MCF 10A (cell line): ENCODE measurements at regions of chr9 and their contacts with region 1.

Region 1: DNA sequence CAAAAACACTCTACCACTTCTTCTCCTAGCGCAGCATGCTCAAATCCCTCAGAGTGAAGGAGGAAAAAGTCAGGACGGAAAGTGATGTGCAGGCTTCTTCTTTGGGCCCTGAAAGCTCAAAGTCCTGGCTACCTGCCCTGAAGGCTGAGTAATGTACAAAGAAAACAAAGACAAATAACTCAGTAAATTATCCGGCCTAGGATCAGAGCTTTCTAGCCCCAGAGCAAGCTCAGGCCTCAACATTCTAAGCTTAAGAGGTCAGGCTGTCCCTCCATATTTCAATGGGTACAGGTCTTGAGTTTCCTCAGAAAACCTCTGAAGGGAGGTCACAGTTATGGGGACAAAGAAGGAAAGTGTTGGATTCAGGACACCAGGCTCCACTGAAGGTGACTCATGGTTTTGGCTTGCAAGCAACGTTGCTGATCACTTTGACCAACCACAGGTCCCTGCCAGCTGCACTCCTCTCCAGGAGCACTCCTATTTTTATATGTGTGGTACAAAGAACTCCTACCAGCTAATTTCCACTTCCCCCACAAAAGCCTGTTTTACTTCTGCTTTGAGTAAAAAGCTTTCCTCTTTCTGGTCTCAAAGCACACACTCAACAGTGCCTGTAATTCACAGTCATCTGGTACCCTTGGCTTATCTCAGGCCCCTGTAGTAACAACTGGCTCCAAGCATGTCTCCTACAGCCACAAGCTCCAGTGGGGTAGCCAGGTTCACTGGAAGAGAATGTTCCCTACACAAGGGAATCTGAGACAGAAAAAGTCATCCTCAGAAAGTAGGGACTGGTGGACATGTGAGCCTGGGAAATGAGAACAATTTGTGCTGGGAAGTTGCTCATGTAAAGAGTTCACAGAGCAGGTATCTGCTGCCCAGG is 115.7 kb downstream of the UGCG start:
- DNase-seq: peak; percentile 92
- H3K4me3 Mint-ChIP-seq: peak overlapping the region; percentile 8
- H3K27ac Mint-ChIP-seq: peak overlapping the region; percentile 84
- H3K4me1 Mint-ChIP-seq: peaks cover 31% of the 10 kb centered on the region
- H3K27me3 Mint-ChIP-seq: no peaks in the 10 kb centered on the region
- CTCF ChIP-seq: no peak

Region 2: DNA sequence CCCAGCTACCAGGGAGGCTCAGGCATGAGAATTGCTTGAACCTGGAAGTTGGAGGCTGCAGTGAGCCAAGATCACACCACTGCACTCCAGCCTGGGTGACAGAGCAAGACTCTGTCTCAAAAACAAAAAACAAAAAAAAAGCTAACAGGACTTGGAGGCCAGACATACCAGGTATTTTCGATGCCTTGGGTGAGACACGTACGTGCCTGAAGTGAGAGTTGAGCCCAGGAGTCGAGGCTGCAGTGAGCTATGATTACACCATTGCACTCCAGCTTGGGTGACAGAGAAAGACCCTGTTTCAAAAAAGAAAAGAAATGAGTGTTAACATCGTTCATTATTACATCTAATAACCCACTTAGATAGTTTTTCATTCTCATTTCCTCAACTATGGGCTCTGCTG is 60.2 kb before region 1 on chr9:
- CTCF ChIA-PET with region 1: no interaction called
- POLR2A ChIA-PET with region 1: no interaction called
- intact Hi-C with region 1: no loop called
- DNase-seq: no peak
- H3K4me3 Mint-ChIP-seq: no peak overlapping the region
- H3K27ac Mint-ChIP-seq: no peak overlapping the region
- H3K4me1 Mint-ChIP-seq: peaks cover 5% of the 10 kb centered on the region
- H3K27me3 Mint-ChIP-seq: no peaks in the 10 kb centered on the region
- CTCF ChIP-seq: no peak

Region 3: GRCh38 chr9:111965566-111966019 is 46.7 kb before region 1 on chr9:
- CTCF ChIA-PET with region 1: interaction called, 3 read pairs
- POLR2A ChIA-PET with region 1: interaction called, 8 read pairs
- intact Hi-C with region 1: loop called (anchors 5 kb)
- DNase-seq: peak; percentile 87
- H3K4me3 Mint-ChIP-seq: peak overlapping the region; percentile 28
- H3K27ac Mint-ChIP-seq: peak overlapping the region; percentile 91
- H3K4me1 Mint-ChIP-seq: peaks cover 27% of the 10 kb centered on the region
- H3K27me3 Mint-ChIP-seq: no peaks in the 10 kb centered on the region
- CTCF ChIP-seq: no peak

Region 4: DNA sequence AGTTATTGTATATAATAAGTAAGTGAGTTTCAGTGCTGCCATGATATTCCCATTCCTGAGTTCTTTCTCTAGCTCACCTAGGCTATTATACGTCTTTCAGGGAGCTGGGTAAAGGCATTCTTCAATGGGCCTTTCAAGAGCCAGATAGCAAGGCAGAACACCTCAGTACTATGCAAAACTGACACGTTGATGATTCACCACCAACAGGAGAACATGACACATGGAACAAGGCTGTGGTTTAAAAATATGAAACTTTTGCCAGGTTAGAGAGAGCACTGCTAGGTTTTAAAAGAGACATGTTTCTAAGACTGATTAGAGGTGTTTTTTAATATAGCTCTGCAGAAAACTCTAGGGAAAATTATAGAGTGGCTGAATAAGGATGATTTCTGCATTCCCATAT is 19.7 kb before region 1 on chr9:
- CTCF ChIA-PET with region 1: interaction called, 6 read pairs
- POLR2A ChIA-PET with region 1: interaction called, 19 read pairs
- intact Hi-C with region 1: no loop called
- DNase-seq: peak; percentile 78
- H3K4me3 Mint-ChIP-seq: no peak overlapping the region
- H3K27ac Mint-ChIP-seq: peak overlapping the region; percentile 73
- H3K4me1 Mint-ChIP-seq: peaks cover 17% of the 10 kb centered on the region
- H3K27me3 Mint-ChIP-seq: no peaks in the 10 kb centered on the region
- CTCF ChIP-seq: no peak

Region 5: DNA sequence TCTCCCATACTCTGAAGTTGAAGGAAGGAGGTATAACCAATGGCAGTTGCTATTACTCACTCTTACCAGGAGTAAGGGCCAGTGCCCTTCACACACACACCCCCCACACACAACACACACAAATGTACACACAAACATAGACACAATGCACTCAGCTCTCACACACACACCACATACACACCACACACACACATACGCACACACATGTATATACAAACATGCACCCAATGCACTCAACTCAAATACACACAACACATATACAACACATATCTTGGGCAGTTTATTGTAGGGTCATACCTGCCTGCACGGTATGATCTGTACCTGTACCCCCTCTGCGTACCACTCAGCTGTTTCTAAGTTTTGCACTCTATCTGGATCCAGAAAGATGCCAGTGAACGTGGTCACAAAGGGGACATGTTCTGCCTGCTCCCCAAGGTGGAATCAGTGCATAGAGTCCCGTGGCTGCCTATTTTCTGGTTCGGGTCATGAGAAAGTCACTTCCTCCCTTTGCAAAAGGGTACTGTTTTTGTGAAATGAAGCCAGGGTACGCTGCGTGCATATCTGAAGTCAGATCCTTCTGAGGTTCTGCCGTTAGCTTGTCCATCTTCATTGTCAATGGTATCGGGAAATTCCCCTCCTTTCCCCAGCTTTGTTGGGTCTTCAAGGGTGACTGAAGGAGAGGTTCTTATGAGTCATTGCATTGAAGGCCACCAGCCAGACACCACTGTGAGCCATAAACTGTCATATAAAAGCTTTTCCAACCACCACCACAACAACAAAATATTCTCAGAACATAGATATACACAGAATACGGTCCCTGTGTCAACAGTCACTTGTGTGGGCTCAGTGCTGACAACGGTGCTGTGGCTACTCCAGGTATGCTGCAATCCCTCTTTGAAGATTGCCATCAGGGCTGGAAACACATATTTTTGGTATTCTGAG is 16.3 kb after region 1 on chr9:
- CTCF ChIA-PET with region 1: interaction called, 4 read pairs
- POLR2A ChIA-PET with region 1: interaction called, 12 read pairs
- intact Hi-C with region 1: no loop called
- DNase-seq: no peak
- H3K4me3 Mint-ChIP-seq: no peak overlapping the region
- H3K27ac Mint-ChIP-seq: peak overlapping the region; percentile 96
- H3K4me1 Mint-ChIP-seq: peaks cover 30% of the 10 kb centered on the region
- H3K27me3 Mint-ChIP-seq: no peaks in the 10 kb centered on the region
- CTCF ChIP-seq: no peak

Region 6: DNA sequence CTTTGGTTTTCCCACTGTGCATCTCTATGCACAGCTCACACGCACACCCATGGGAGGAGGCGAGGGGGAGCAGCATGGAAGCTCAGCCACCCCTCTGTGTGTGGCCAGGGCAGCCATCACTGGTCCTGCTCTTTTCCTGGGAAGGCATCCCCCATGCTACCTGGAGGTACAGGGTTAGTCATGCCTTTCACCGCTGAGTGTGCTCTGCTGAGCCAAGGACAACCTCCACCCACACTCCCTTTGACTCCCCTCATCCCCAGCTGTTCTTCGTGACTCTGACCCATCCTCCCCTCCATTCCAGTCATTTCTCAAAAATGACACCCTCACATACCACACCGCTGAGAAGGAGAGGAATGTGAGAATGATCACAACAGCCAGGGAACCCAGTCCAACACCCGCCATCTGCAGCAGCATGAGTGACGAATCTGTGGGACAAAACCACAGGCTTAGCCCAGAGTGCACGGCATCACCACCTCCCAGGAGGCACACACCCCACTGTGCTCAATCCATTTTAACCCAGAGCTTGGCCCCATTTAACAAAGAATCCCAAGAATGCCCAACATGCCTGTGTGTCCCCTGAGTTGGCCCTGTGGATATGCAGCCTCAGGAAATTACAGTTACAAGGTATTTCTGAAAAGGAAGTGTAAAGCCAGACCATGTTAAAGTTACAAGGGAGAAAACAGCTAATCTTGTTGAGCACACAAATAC is 29.4 kb after region 1 on chr9:
- CTCF ChIA-PET with region 1: interaction called, 3 read pairs
- POLR2A ChIA-PET with region 1: interaction called, 5 read pairs
- intact Hi-C with region 1: loop called (anchors 2 kb)
- DNase-seq: peak; percentile 95
- H3K4me3 Mint-ChIP-seq: peak overlapping the region; percentile 24
- H3K27ac Mint-ChIP-seq: peak overlapping the region; percentile 85
- H3K4me1 Mint-ChIP-seq: peaks cover 40% of the 10 kb centered on the region
- H3K27me3 Mint-ChIP-seq: no peaks in the 10 kb centered on the region
- CTCF ChIP-seq: no peak

Region 7: DNA sequence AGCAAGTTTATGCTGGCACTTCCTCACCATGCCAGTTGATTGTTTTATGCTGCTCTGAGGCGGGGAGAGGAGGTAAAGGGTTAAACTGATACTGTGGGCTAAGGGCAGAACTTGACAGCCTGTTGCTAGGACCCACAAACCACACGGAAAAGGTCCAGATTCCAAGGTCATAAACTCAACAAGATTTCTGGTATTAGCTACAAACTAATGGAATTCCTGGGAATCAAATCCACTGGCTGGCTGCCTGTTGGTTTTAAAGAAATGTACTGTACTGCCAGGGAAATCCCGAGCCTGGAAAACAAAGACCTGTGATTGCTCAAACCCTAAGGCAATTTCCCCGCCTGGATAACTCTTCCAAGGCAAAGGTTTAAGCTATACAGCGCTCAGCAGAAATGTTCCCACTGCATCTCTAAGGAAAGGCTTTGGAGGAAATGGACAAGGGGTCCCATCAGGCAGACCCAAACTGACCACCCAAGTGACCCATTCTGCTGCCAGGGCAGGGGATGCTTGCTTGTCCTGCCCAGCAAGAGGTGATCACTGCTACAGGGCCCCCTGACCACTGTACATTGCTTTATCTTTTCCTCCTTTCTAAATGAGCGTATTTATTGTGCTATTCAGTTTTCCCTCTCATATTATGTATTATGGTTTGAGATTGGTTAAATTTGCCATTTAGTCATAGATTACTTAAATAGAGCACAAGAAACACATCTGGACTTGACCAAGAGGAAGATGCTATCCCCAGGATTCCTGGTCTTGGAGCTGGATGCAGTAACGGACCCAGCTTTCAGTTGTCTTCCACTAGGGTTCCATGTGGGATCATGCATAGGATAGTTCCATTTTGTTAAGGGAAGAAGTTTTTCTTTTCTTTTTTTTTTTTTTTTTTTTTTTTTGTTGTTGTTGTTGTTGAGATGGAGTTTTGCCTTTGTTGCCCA is 38.5 kb after region 1 on chr9:
- CTCF ChIA-PET with region 1: interaction called, 4 read pairs
- POLR2A ChIA-PET with region 1: interaction called, 15 read pairs
- intact Hi-C with region 1: no loop called
- DNase-seq: peak; percentile 89
- H3K4me3 Mint-ChIP-seq: no peak overlapping the region
- H3K27ac Mint-ChIP-seq: no peak overlapping the region
- H3K4me1 Mint-ChIP-seq: peaks cover 35% of the 10 kb centered on the region
- H3K27me3 Mint-ChIP-seq: no peaks in the 10 kb centered on the region
- CTCF ChIP-seq: no peak

Region 8: GRCh38 chr9:112061152-112061740 is 49.0 kb after region 1 on chr9:
- CTCF ChIA-PET with region 1: no interaction called
- POLR2A ChIA-PET with region 1: interaction called, 11 read pairs
- intact Hi-C with region 1: no loop called
- DNase-seq: peak; percentile 92
- H3K4me3 Mint-ChIP-seq: no peak overlapping the region
- H3K27ac Mint-ChIP-seq: peak overlapping the region; percentile 53
- H3K4me1 Mint-ChIP-seq: peaks cover 43% of the 10 kb centered on the region
- H3K27me3 Mint-ChIP-seq: no peaks in the 10 kb centered on the region
- CTCF ChIP-seq: no peak